T-cell (primary cell): ENCODE measurements at regions of chr12 and their contacts with region 1.

Region 1: DNA sequence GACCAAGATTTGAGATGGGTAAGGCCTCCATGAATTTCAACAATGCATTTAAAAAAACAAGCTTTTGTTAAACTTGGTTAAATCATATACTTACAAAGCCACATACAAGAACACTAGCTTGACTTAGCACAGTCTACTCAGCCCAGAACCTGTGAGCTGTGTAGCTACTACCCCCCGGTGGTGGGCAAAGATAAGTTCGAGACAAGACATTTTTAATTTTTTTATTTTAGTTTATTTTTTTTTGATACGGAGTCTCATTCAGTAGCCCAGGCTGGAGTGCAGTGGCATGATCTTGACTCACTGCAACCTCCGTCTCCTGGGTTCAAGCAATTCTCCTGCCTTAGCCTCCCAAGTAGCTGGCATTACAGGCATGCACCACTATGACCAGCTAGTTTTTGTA is 3.7 kb upstream of the NECAP1 start:
- DNase-seq: peak in 34 of 35 experiments; percentile 42 to 82 (median 66)
- ATAC-seq: peak; percentile 23 to 40 (median 32)
- H3K4me3 ChIP-seq: no peak overlapping the region
- H3K4me3 Mint-ChIP-seq: no peak overlapping the region
- H3K27ac ChIP-seq: no peak overlapping the region
- H3K27ac Mint-ChIP-seq: peak overlapping the region; percentile 94
- H3K4me1 ChIP-seq: peaks cover 15 to 23% of the 10 kb centered on the region in 2 experiments
- H3K4me1 Mint-ChIP-seq: peaks cover 45 to 61% (median 47%) of the 10 kb centered on the region in 3 donors
- H3K27me3 ChIP-seq: no peaks in the 10 kb centered on the region
- H3K27me3 Mint-ChIP-seq: no peaks in the 10 kb centered on the region

Region 2: GRCh38 chr12:7403466-7403865 is 674.9 kb before region 1 on chr12:
- CTCF ChIA-PET with region 1: no interaction called
- POLR2A ChIA-PET with region 1: no interaction called
- DNase-seq: no peak
- ATAC-seq: no peak
- H3K4me3 ChIP-seq: no peak overlapping the region
- H3K4me3 Mint-ChIP-seq: no peak overlapping the region
- H3K27ac ChIP-seq: no peak overlapping the region
- H3K27ac Mint-ChIP-seq: no peak overlapping the region
- H3K4me1 ChIP-seq: no peaks in the 10 kb centered on the region
- H3K4me1 Mint-ChIP-seq: no peaks in the 10 kb centered on the region
- H3K27me3 ChIP-seq: no peaks in the 10 kb centered on the region
- H3K27me3 Mint-ChIP-seq: peaks cover 9 to 15% of the 10 kb centered on the region in 2 donors

Region 3: DNA sequence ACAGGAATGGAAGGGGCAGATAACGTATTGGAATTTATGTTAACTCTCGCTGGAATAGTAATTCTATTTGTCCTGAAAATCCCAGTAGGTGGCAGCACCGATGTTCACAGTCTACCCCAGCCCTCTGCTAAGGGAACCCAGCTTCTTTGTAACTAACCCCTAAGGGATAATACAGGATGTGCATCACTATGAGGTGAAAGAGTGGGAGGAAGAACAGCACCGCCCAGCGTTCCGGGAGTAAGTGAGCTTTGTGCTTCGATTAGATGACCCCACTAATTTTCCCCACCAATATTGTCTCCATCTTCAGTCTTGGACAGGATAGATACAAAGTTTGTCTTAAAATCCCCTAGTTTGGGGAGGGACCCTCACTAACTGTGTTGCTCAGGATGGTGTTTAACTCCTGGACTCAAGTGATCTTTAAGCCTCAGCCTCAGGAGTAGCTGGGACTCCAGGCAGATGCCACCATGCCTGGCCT is 145.1 kb before region 1 on chr12:
- CTCF ChIA-PET with region 1: interaction called, 3 to 19 read pairs
- POLR2A ChIA-PET with region 1: interaction called, 4 to 8 read pairs
- DNase-seq: peak; percentile 30 to 95 (median 71)
- ATAC-seq: peak; percentile 77 to 82 (median 79)
- H3K4me3 ChIP-seq: peak overlapping the region; percentile 90 to 99
- H3K4me3 Mint-ChIP-seq: no peak overlapping the region
- H3K27ac ChIP-seq: peak overlapping the region; percentile 80
- H3K27ac Mint-ChIP-seq: no peak overlapping the region
- H3K4me1 ChIP-seq: peaks cover 28 to 59% of the 10 kb centered on the region in 2 experiments
- H3K4me1 Mint-ChIP-seq: peaks cover 36 to 40% (median 37%) of the 10 kb centered on the region in 3 donors
- H3K27me3 ChIP-seq: no peaks in the 10 kb centered on the region
- H3K27me3 Mint-ChIP-seq: no peaks in the 10 kb centered on the region

Region 4: DNA sequence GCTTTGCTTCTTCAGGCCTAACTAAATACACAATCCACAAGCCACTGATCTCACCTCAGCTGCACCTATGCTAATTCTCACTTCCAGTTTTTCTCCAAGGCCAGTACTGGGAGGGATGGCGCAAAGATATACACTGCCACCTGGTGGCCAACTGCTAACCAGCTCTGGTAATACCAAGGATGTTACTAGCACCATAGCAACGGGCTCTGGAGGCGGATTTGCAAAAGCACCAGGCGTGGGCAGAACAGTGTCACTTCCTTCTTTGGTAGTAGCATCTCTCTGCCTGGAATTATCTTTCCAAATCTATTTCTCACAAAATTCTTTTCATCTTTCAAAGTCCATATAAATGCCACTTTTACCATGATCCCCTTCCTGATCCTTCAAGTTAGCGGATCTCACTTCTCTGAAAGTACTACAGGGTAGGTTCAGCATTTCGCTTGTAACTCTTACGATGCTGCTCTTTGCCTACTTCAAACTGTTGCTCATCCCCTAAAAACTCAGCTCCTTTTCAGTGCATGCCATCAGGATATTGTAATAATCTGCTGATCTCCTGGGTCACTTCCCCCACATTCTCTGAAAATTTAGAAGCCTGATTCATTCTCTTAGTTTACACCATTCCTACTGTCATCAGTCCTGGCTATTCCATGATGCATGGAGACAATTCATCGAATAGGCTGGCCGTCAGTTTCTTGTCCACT is 83.0 kb before region 1 on chr12:
- CTCF ChIA-PET with region 1: interaction called in 1 of 2 experiments, 10 read pairs
- POLR2A ChIA-PET with region 1: no interaction called
- DNase-seq: peak; percentile 47 to 87 (median 79)
- ATAC-seq: peak; percentile 99 to 100 (median 99)
- H3K4me3 ChIP-seq: no peak overlapping the region
- H3K4me3 Mint-ChIP-seq: no peak overlapping the region
- H3K27ac ChIP-seq: peak overlapping the region; percentile 36
- H3K27ac Mint-ChIP-seq: no peak overlapping the region
- H3K4me1 ChIP-seq: peaks cover 3 to 17% of the 10 kb centered on the region in 2 experiments
- H3K4me1 Mint-ChIP-seq: peaks cover 13 to 19% (median 14%) of the 10 kb centered on the region in 3 donors
- H3K27me3 ChIP-seq: peaks cover 0 to 2% of the 10 kb centered on the region in 2 experiments
- H3K27me3 Mint-ChIP-seq: no peaks in the 10 kb centered on the region

Region 5: GRCh38 chr12:8045952-8046944 is 32.1 kb before region 1 on chr12:
- CTCF ChIA-PET with region 1: interaction called, 23 to 88 read pairs
- POLR2A ChIA-PET with region 1: interaction called, 6 to 7 read pairs
- DNase-seq: peak; percentile 52 to 89 (median 78)
- ATAC-seq: peak; percentile 65 to 82 (median 78)
- H3K4me3 ChIP-seq: no peak overlapping the region
- H3K4me3 Mint-ChIP-seq: no peak overlapping the region
- H3K27ac ChIP-seq: no peak overlapping the region
- H3K27ac Mint-ChIP-seq: no peak overlapping the region
- H3K4me1 ChIP-seq: no peaks in the 10 kb centered on the region
- H3K4me1 Mint-ChIP-seq: peaks cover 8 to 10% (median 10%) of the 10 kb centered on the region in 3 donors
- H3K27me3 ChIP-seq: no peaks in the 10 kb centered on the region
- H3K27me3 Mint-ChIP-seq: no peaks in the 10 kb centered on the region

Region 6: GRCh38 chr12:8065991-8066594 is 12.3 kb before region 1 on chr12 and contains the start of gene C3AR1:
- CTCF ChIA-PET with region 1: interaction called, 3 to 30 read pairs
- POLR2A ChIA-PET with region 1: interaction called, 3 read pairs
- DNase-seq: peak in 34 of 35 experiments; percentile 13 to 78 (median 40)
- ATAC-seq: peak; percentile 100
- H3K4me3 ChIP-seq: peak within 1 kb of the TSS in 1 of 2 donors; percentile 34
- H3K4me3 Mint-ChIP-seq: peak within 1 kb of the TSS; percentile 61 to 66 (median 62)
- H3K27ac ChIP-seq: peak within 1 kb of the TSS; percentile 78
- H3K27ac Mint-ChIP-seq: peak within 1 kb of the TSS; percentile 92 to 93
- H3K4me1 ChIP-seq: peaks cover 16 to 25% of the 10 kb centered on the region in 2 experiments
- H3K4me1 Mint-ChIP-seq: peaks cover 32 to 41% (median 37%) of the 10 kb centered on the region in 3 donors
- H3K27me3 ChIP-seq: no peaks in the 10 kb centered on the region
- H3K27me3 Mint-ChIP-seq: no peaks in the 10 kb centered on the region
- total RNA-seq, gene C3AR1: 0.68 to 5.1 (median 2.4) TPM

Region 7: DNA sequence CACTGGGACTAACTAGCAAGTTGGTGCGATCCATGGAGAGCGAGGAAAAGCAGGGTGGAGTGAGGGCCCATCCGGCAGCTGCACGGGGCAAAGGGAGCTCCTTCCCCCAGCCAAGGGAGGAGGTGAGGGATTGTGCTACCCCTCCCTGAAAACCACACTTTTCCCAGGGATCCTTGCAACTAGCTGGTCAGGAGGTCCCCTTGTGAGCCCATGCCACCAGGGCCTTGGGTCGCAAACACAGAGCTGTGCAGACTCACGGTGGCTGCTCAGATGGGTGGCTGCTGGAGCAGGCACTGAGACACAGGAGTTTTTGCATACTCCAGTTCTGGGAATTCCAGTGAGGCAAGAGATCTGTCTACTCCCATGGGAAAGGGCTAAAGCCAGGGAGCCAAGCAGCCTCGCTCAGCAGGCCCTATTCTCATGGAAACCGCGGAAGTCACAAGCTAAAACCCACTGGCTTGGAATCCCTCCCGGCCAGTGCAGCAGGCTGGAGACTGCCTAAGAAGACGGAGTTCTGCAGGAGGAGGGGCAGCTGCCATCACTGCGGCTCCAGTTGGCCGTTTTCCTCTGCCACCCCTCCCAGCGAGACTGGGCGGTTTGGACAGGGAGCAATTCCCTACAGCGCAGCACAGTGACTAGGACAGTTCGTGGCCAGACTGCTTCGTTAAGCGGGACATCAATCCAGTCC is 67.5 kb after region 1 on chr12:
- CTCF ChIA-PET with region 1: no interaction called
- POLR2A ChIA-PET with region 1: no interaction called
- DNase-seq: no peak
- ATAC-seq: no peak
- H3K4me3 ChIP-seq: no peak overlapping the region
- H3K4me3 Mint-ChIP-seq: no peak overlapping the region
- H3K27ac ChIP-seq: no peak overlapping the region
- H3K27ac Mint-ChIP-seq: no peak overlapping the region
- H3K4me1 ChIP-seq: no peaks in the 10 kb centered on the region
- H3K4me1 Mint-ChIP-seq: no peaks in the 10 kb centered on the region
- H3K27me3 ChIP-seq: peaks cover 0 to 13% of the 10 kb centered on the region in 2 experiments
- H3K27me3 Mint-ChIP-seq: peaks cover 4 to 15% of the 10 kb centered on the region in 2 donors